RWPE1 (cell line): ENCODE measurements at regions of chr15 and their contacts with region 1.

Region 1: GRCh38 chr15:25572191-25572590 is 133.4 kb upstream of the UBE3A start:
- DNase-seq: no peak
- H3K27ac ChIP-seq: no peak overlapping the region
- CTCF ChIP-seq: no peak

Region 2: DNA sequence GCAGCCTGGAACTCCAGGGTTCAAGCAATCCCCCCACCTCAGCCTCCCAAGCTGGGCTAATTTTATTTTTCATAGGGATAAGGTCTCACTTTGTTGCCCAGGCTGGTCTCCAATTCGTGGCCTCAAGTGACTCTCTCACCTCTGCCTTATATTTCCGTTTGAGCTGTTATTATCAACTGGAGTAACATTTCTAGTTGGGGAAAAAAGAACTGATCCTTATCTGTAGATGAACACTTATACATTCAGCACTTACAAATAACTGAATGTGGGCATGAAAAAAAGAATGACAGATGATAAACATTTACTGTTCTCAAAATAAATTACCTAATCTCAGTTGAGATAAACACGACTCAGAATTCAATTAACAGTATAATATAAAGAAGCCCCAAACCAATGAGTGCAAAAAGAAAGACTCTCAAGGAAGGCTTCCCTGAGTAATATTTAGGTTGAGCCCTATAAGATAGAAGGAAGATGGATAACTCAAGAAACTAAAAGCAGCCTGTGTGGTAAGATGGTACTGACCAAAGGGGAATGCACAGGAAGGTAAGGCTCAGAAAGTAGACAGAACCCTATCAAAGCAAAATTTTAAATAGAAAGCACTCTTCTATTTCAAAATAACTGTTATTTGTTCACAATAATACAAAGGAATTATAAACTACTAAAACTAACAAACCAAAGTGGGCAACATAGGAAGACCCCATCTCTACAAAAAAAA is 145.1 kb before region 1 on chr15:
- CTCF ChIA-PET with region 1: no interaction called
- POLR2A ChIA-PET with region 1: no interaction called
- DNase-seq: no peak
- H3K27ac ChIP-seq: no peak overlapping the region
- CTCF ChIP-seq: no peak

Region 3: DNA sequence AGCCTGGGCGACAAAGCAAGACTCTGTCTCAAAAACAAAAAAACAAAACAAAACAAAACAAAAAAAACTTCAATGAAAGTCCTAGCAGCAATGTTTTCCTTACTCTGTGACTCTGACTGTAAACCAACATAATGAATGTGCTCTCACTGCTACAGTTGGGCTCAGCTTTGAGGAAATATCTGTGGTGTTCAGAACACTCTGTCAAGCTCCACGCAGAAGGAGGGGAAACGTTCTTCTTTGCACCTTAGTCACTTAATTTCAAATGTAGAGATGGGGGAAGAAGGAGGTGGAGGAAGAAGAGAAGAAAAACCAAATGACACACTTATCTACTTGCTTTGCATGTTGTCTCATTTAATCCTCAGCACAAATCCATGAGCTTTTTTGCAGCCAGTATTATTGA is 26.3 kb before region 1 on chr15:
- CTCF ChIA-PET with region 1: interaction called, 11 read pairs
- POLR2A ChIA-PET with region 1: no interaction called
- DNase-seq: no peak
- H3K27ac ChIP-seq: no peak overlapping the region
- CTCF ChIP-seq: no peak

Region 4: GRCh38 chr15:25682340-25682739 is 110.1 kb after region 1 on chr15:
- CTCF ChIA-PET with region 1: no interaction called
- POLR2A ChIA-PET with region 1: no interaction called
- DNase-seq: no peak
- H3K27ac ChIP-seq: no peak overlapping the region
- CTCF ChIP-seq: no peak